H1 (cell line): ENCODE measurements at regions of chr1 and their contacts with region 1.

Region 1: GRCh38 chr1:20430355-20431175 is 55.4 kb downstream of the CAMK2N1 start:
- DNase-seq: peak; percentile 50 to 94
- H3K4me3 ChIP-seq: no peak overlapping the region
- H3K27ac ChIP-seq: no peak overlapping the region
- H3K4me1 ChIP-seq: peaks cover 0 to 6% (median 0%) of the 10 kb centered on the region in 4 experiments; a peak in 2 of 7 replicates
- H3K27me3 ChIP-seq: peaks cover 0 to 5% (median under 1%) of the 10 kb centered on the region in 4 experiments; a peak in 3 of 7 replicates
- CTCF ChIP-seq: peak; percentile 93 to 96 (median 93)
- EP300 ChIP-seq: no peak
- POLR2A ChIP-seq: no peak
- RAD21 ChIP-seq: peak; percentile 96 to 98

Region 2: GRCh38 chr1:20212685-20213331 is 217.8 kb before region 1 on chr1:
- CTCF ChIA-PET with region 1: interaction called, 32 read pairs
- POLR2A ChIA-PET with region 1: no interaction called
- DNase-seq: peak; percentile 81 to 82
- H3K4me3 ChIP-seq: peak overlapping the region in 1 of 4 experiments; percentile 16; a peak in 1 of 8 replicates
- H3K27ac ChIP-seq: no peak overlapping the region
- H3K4me1 ChIP-seq: peaks cover 0 to 4% (median 2%) of the 10 kb centered on the region in 4 experiments; a peak in 3 of 7 replicates
- H3K27me3 ChIP-seq: no peaks in the 10 kb centered on the region; a peak in 1 of 7 replicates
- CTCF ChIP-seq: peak; percentile 32 to 90 (median 43)
- EP300 ChIP-seq: peak in 1 of 2 experiments; percentile 56; a peak in 1 of 3 replicates
- POLR2A ChIP-seq: no peak
- RAD21 ChIP-seq: peak; percentile 79 to 88

Region 3: DNA sequence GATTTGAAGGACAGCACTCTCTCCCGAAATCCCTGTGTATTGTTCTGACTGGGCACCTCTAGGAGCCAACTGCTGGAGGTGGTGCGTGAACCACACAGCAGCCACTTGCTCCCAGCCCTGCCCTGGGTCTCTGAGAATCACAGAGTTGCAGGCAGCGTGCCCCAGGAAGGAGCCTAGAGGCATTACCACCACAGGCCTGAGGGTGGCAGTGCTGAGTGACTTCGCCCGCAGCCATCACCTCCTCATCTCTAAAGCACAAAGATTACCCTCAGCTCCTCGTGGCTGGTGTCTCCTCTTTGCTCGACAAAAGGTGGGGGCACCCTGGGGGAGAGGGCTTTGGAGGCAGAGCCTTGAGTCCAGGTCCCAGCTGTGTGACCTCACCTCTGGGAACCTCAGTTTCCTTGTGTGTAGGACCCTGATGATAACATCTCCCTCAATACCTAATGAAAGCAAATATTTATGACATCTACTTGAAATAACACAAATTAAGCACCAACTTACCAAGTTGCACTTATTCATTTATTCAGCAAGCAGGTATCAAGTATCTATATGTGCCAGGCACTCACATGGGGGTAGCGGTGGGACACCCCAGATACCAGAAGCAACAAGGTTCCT is 53.6 kb before region 1 on chr1:
- CTCF ChIA-PET with region 1: interaction called, 20 read pairs
- POLR2A ChIA-PET with region 1: no interaction called
- DNase-seq: peak; percentile 41 to 94
- H3K4me3 ChIP-seq: no peak overlapping the region
- H3K27ac ChIP-seq: no peak overlapping the region
- H3K4me1 ChIP-seq: no peaks in the 10 kb centered on the region
- H3K27me3 ChIP-seq: peaks cover 0 to 10% (median 3%) of the 10 kb centered on the region in 4 experiments; a peak in 4 of 7 replicates
- CTCF ChIP-seq: peak; percentile 84 to 93 (median 91)
- EP300 ChIP-seq: no peak
- POLR2A ChIP-seq: no peak
- RAD21 ChIP-seq: peak; percentile 65 to 76

Region 4: GRCh38 chr1:20411196-20411980 is 19.2 kb before region 1 on chr1:
- CTCF ChIA-PET with region 1: interaction called, 20 read pairs
- POLR2A ChIA-PET with region 1: no interaction called
- DNase-seq: peak in 1 of 2 experiments; percentile 29
- H3K4me3 ChIP-seq: no peak overlapping the region
- H3K27ac ChIP-seq: no peak overlapping the region
- H3K4me1 ChIP-seq: 0 out of 7 replicates have a peak, but pooled peaks cover 0 to 3% (median 0%) of the 10 kb centered on the region in 4 experiments
- H3K27me3 ChIP-seq: peaks cover 15 to 68% (median 39%) of the 10 kb centered on the region in 4 experiments
- CTCF ChIP-seq: no peak
- EP300 ChIP-seq: no peak
- POLR2A ChIP-seq: no peak
- RAD21 ChIP-seq: no peak

Region 5: GRCh38 chr1:20440785-20441200 is 10.2 kb after region 1 on chr1:
- CTCF ChIA-PET with region 1: interaction called, 45 read pairs
- POLR2A ChIA-PET with region 1: interaction called, 5 read pairs
- DNase-seq: peak; percentile 17 to 80
- H3K4me3 ChIP-seq: no peak overlapping the region
- H3K27ac ChIP-seq: no peak overlapping the region
- H3K4me1 ChIP-seq: peaks cover 0 to 10% (median 3%) of the 10 kb centered on the region in 4 experiments; a peak in 5 of 7 replicates
- H3K27me3 ChIP-seq: peaks cover 0 to 4% (median 1%) of the 10 kb centered on the region in 4 experiments; a peak in 4 of 7 replicates
- CTCF ChIP-seq: no peak
- EP300 ChIP-seq: no peak
- POLR2A ChIP-seq: no peak
- RAD21 ChIP-seq: no peak